B cell (primary cell): ENCODE measurements at regions of chr1 and their contacts with region 1.

Region 1: DNA sequence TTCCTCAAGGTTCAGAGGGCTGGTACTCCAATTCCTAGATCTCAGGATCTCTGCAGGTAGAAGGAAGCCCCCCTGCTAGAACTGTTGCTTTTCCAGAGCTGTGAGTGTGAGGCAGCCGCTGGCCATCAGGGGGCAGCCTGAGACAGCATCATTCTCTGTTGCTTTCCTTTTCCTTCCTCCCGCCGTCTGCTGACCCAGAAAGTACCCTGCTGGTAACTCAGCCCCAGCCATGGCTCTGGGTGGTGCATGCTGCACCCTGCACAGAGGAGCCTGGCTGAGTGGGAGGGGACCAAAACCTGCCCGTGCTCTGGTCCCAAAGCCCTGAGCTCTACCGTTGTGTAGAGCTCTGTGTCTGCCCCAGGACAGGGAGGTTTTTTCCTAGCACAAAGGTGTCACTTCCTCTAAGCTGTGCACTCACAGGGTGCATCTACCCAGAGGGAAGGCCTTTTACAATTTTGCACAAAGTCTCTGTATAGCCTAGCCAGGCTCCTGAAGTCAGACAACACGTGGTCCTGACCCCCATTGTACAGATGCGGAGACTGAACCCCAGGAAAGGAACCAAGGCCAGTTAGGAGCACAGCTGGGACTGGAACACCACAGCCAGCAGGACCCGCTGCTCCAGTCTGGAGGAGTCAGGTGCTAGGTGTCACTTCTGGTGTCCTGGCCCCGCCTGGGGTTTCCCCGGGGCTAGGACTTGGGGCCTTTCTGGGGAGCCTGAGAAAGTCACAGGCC is 5.6 kb upstream of the FAM131C start:
- DNase-seq: peak; percentile 83
- ATAC-seq: peak; percentile 88
- H3K4me3 ChIP-seq: peak overlapping the region in 4 of 5 experiments; percentile 25 to 58 (median 41)
- H3K4me3 Mint-ChIP-seq: peak overlapping the region; percentile 79
- H3K27ac ChIP-seq: no peak overlapping the region
- H3K27ac Mint-ChIP-seq: peak overlapping the region; percentile 61
- H3K4me1 ChIP-seq: peaks cover 3 to 8% of the 10 kb centered on the region in 2 donors
- H3K4me1 Mint-ChIP-seq: peaks cover 11% of the 10 kb centered on the region
- H3K27me3 ChIP-seq: peaks cover 0 to 15% (median 2%) of the 10 kb centered on the region in 4 experiments
- H3K27me3 Mint-ChIP-seq: peaks cover 8% of the 10 kb centered on the region
- CTCF ChIP-seq: peak; percentile 85

Region 2: DNA sequence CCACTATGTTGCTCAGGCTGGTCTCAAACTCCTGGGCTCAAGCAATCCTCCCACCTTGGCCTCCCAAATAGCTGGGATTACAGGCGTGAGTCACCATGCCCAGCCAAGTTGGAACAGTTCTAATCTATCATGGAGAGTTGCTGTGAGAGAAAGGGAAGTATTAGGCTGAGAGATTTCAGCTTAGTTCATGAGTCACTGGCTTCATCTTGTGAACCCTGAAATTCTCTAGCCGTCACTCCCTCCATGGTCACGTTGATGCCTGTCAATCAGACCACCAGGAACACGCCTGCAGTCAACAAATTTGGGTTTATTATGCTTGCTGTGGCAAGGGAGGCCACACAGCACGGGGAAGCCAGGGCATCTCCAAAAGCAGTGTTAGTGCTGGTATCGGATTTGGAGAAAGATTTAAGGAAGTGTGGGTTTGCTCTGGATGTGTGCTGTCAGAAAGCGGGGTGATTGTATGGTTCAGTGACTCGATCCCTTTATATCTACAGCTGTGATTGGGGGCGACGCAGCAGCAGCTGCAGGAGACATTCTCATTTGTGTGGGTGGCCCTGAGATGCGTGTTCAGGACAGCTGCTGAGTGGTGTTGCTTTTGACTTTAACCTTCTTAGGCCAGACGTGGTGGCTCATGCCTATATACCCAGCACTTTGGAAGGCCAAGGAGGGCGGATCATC is 290.3 kb before region 1 on chr1:
- CTCF ChIA-PET with region 1: interaction called, 10 read pairs
- POLR2A ChIA-PET with region 1: no interaction called
- intact Hi-C with region 1: no loop called
- DNase-seq: no peak
- ATAC-seq: no peak
- H3K4me3 ChIP-seq: no peak overlapping the region
- H3K4me3 Mint-ChIP-seq: no peak overlapping the region
- H3K27ac ChIP-seq: no peak overlapping the region
- H3K27ac Mint-ChIP-seq: no peak overlapping the region
- H3K4me1 ChIP-seq: peaks cover 3 to 5% of the 10 kb centered on the region in 2 donors
- H3K4me1 Mint-ChIP-seq: peaks cover 2% of the 10 kb centered on the region
- H3K27me3 ChIP-seq: no peaks in the 10 kb centered on the region
- H3K27me3 Mint-ChIP-seq: peaks cover 10% of the 10 kb centered on the region
- CTCF ChIP-seq: no peak

Region 3: GRCh38 chr1:16124377-16125087 is 45.4 kb after region 1 on chr1:
- CTCF ChIA-PET with region 1: no interaction called
- POLR2A ChIA-PET with region 1: no interaction called
- intact Hi-C with region 1: no loop called
- DNase-seq: no peak
- ATAC-seq: no peak
- H3K4me3 ChIP-seq: no peak overlapping the region
- H3K4me3 Mint-ChIP-seq: no peak overlapping the region
- H3K27ac ChIP-seq: no peak overlapping the region
- H3K27ac Mint-ChIP-seq: no peak overlapping the region
- H3K4me1 ChIP-seq: no peaks in the 10 kb centered on the region
- H3K4me1 Mint-ChIP-seq: no peaks in the 10 kb centered on the region
- H3K27me3 ChIP-seq: peaks cover 0 to 29% (median 5%) of the 10 kb centered on the region in 4 experiments
- H3K27me3 Mint-ChIP-seq: peaks cover 49% of the 10 kb centered on the region
- CTCF ChIP-seq: no peak

Region 4: GRCh38 chr1:16187748-16188401 is 108.8 kb after region 1 on chr1:
- CTCF ChIA-PET with region 1: interaction called, 237 read pairs
- POLR2A ChIA-PET with region 1: interaction called, 5 read pairs
- intact Hi-C with region 1: loop called (anchors 1 kb)
- DNase-seq: peak; percentile 81
- ATAC-seq: peak; percentile 88
- H3K4me3 ChIP-seq: no peak overlapping the region
- H3K4me3 Mint-ChIP-seq: no peak overlapping the region
- H3K27ac ChIP-seq: no peak overlapping the region
- H3K27ac Mint-ChIP-seq: no peak overlapping the region
- H3K4me1 ChIP-seq: peaks cover 5 to 7% of the 10 kb centered on the region in 2 donors
- H3K4me1 Mint-ChIP-seq: peaks cover 2% of the 10 kb centered on the region
- H3K27me3 ChIP-seq: peaks cover 0 to 26% (median 9%) of the 10 kb centered on the region in 4 experiments
- H3K27me3 Mint-ChIP-seq: peaks cover 24% of the 10 kb centered on the region
- CTCF ChIP-seq: peak; percentile 95

Region 5: GRCh38 chr1:16236511-16237342 is 157.6 kb after region 1 on chr1 and contains the start of gene CPLANE2:
- CTCF ChIA-PET with region 1: interaction called, 93 read pairs
- POLR2A ChIA-PET with region 1: interaction called, 4 read pairs
- intact Hi-C with region 1: loop called (anchors 2 kb)
- DNase-seq: peak; percentile 97
- ATAC-seq: peak; percentile 79
- H3K4me3 ChIP-seq: peak within 1 kb of the TSS; percentile 55 to 98 (median 76)
- H3K4me3 Mint-ChIP-seq: peak within 1 kb of the TSS; percentile 85
- H3K27ac ChIP-seq: peak within 1 kb of the TSS; percentile 82 to 92
- H3K27ac Mint-ChIP-seq: peak within 1 kb of the TSS; percentile 96
- H3K4me1 ChIP-seq: peaks cover 12 to 17% of the 10 kb centered on the region in 2 donors
- H3K4me1 Mint-ChIP-seq: peaks cover 16% of the 10 kb centered on the region
- H3K27me3 ChIP-seq: no peaks in the 10 kb centered on the region
- H3K27me3 Mint-ChIP-seq: no peaks in the 10 kb centered on the region
- CTCF ChIP-seq: no peak
- total RNA-seq, gene CPLANE2: 11.1 and 14.3 TPM in 2 replicates

Region 6: DNA sequence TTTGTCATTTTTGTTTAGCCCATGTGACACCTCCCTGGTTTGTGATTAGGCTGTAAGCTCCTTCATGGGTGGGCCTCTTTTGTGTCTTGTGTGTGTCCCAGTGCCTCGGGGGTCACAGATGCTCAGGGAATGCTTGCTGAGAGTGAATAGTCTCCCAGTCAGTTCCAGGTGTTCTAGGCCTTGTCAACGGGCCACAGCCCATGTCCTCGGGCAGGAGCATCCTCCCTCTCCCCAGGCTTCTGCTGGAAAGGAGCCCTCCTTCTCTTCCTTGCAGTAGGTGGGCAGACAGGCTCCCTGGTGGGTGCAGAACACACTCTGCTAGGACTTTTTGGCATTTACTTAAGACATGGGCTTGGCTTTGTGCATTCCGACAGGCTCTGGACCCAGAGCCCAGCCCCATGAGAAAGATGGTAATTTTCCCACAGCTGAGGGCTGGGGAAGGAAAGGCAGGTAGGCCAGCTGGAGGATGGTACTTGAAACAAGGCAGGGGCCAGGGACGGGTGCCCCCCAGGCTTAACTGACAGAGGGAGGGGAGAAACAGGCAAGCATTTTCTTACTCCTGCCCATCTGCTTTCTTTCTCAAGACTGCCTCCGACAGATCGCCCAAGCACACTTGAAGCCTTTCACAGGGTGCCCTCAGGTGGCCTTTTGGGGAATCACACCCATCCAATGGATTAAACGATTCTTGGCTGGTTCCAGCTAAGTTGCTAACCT is 165.0 kb after region 1 on chr1:
- CTCF ChIA-PET with region 1: interaction called, 93 read pairs
- POLR2A ChIA-PET with region 1: no interaction called
- intact Hi-C with region 1: loop called (anchors 1 kb)
- DNase-seq: peak; percentile 79
- ATAC-seq: peak; percentile 93
- H3K4me3 ChIP-seq: no peak overlapping the region
- H3K4me3 Mint-ChIP-seq: no peak overlapping the region
- H3K27ac ChIP-seq: no peak overlapping the region
- H3K27ac Mint-ChIP-seq: no peak overlapping the region
- H3K4me1 ChIP-seq: peaks cover 6 to 7% of the 10 kb centered on the region in 2 donors
- H3K4me1 Mint-ChIP-seq: peaks cover 12% of the 10 kb centered on the region
- H3K27me3 ChIP-seq: no peaks in the 10 kb centered on the region
- H3K27me3 Mint-ChIP-seq: no peaks in the 10 kb centered on the region
- CTCF ChIP-seq: peak; percentile 81

Region 7: GRCh38 chr1:16613185-16614147 is 534.4 kb after region 1 on chr1 and contains the start of gene NBPF1:
- CTCF ChIA-PET with region 1: interaction called, 5 read pairs
- POLR2A ChIA-PET with region 1: no interaction called
- intact Hi-C with region 1: loop called (anchors 5 kb)
- DNase-seq: peak; percentile 94
- ATAC-seq: peak; percentile 95
- H3K4me3 ChIP-seq: peak within 1 kb of the TSS; percentile 65 to 82 (median 67)
- H3K4me3 Mint-ChIP-seq: no peak within 1 kb of the TSS
- H3K27ac ChIP-seq: peak within 1 kb of the TSS; percentile 16 to 57
- H3K27ac Mint-ChIP-seq: no peak within 1 kb of the TSS
- H3K4me1 ChIP-seq: peaks cover 21% of the 10 kb centered on the region in 2 donors
- H3K4me1 Mint-ChIP-seq: no peaks in the 10 kb centered on the region
- H3K27me3 ChIP-seq: peaks cover 0 to 8% (median 5%) of the 10 kb centered on the region in 4 experiments
- H3K27me3 Mint-ChIP-seq: no peaks in the 10 kb centered on the region
- CTCF ChIP-seq: no peak
- total RNA-seq, gene NBPF1: 64.1 and 66.3 TPM in 2 replicates